Colonic mucosa (tissue), 4 donors: ENCODE measurements at regions of chr12 and their contacts with region 1.

Region 1: DNA sequence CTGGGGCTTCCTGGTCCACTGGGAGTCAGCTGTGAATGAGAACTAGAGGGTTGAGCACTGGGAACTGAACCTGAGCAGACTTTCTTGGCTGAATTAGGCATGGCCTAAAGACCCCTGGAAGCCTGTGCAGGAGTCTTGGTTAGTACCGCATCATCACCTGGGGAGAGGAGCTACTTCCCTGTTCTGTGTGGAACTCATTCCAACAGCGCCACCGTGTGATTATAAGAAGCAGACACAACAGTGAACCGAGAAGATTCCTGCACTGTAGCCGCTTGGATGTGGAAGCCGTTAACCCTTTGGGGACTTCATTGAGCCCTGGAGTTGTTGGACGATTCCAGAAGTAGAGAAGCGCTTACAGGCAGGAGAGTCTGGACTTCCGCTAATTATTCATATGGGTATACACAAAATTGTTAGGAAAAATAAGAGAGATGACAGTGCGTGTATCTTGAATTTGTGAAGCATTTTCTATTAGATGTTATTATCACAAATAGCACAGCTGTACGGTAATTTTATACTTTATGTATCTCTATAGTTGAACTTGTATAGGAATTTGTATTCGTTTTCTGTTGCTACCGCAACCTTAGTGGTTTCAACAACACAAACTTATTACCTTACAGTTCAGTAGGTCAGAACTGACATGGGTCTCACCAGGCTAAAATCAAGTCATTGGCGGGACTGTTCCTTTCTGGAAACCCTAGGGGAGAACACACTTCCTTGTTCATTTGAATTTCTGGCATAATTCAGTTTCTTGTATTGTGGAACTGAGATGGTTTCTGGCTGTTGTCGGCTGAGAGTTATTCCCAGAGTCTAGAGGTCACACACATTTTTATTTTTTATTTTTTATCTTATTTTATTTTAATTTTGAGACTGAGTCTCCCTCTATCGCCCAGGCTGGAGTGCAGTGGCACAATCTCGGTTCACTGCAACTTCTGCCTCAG is 100.7 kb downstream of the C2CD5 start:
- DNase-seq: peak; percentile 62
- H3K4me3 ChIP-seq: no peak overlapping the region
- H3K27ac ChIP-seq: no peak overlapping the region
- H3K4me1 ChIP-seq: no peaks in the 10 kb centered on the region
- H3K27me3 ChIP-seq: no peaks in the 10 kb centered on the region
- CTCF ChIP-seq: peak; percentile 66

Region 2: GRCh38 chr12:21697904-21698630 is 745.6 kb before region 1 on chr12:
- intact Hi-C with region 1: loop called (anchors 5 kb)
- DNase-seq: no peak
- H3K4me3 ChIP-seq: no peak overlapping the region
- H3K27ac ChIP-seq: no peak overlapping the region
- H3K4me1 ChIP-seq: no peaks in the 10 kb centered on the region
- H3K27me3 ChIP-seq: no peaks in the 10 kb centered on the region
- CTCF ChIP-seq: peak; percentile 41

Region 3: DNA sequence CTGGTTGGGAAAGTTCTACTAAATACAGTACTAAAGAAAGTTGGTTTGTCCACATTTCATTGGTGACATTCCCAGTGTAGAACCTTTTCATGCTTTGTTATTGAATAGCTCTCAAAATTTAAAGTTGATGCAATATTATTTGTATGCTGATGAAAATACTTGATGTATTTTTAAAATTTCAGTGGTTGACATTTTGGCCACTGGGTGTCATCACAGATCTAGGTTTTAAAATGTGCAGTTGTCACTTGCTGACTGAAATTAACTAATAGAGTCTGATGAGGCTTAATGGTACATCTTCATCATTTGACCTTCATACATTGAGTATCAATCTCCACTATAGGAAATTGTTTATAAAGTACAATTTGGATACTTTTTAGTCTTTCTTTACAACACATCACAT is 360.5 kb before region 1 on chr12:
- intact Hi-C with region 1: loop called (anchors 5 kb)
- DNase-seq: no peak
- H3K4me3 ChIP-seq: no peak overlapping the region
- H3K27ac ChIP-seq: no peak overlapping the region
- H3K4me1 ChIP-seq: no peaks in the 10 kb centered on the region
- H3K27me3 ChIP-seq: no peaks in the 10 kb centered on the region
- CTCF ChIP-seq: peak; percentile 13

Region 4: GRCh38 chr12:22100958-22101748 is 342.5 kb before region 1 on chr12:
- intact Hi-C with region 1: loop called (anchors 5 kb)
- DNase-seq: peak; percentile 54
- H3K4me3 ChIP-seq: no peak overlapping the region
- H3K27ac ChIP-seq: no peak overlapping the region
- H3K4me1 ChIP-seq: no peaks in the 10 kb centered on the region
- H3K27me3 ChIP-seq: no peaks in the 10 kb centered on the region
- CTCF ChIP-seq: peak; percentile 34